Natural killer cell (primary cell): ENCODE measurements at regions of chr15 and their contacts with region 1.

Region 1: GRCh38 chr15:94230956-94231722 is at the start of gene MCTP2:
- DNase-seq: peak; percentile 90 to 93
- ATAC-seq: peak; percentile 82 to 97 (median 90)
- H3K4me3 ChIP-seq: peak within 1 kb of the TSS; percentile 78
- H3K4me3 Mint-ChIP-seq: peak within 1 kb of the TSS; percentile 90
- H3K27ac ChIP-seq: peak within 1 kb of the TSS; percentile 99
- H3K27ac Mint-ChIP-seq: peak within 1 kb of the TSS; percentile 90 to 96
- H3K4me1 ChIP-seq: peaks cover 45% of the 10 kb centered on the region
- H3K4me1 Mint-ChIP-seq: peaks cover 78 to 80% of the 10 kb centered on the region in 2 donors
- H3K27me3 ChIP-seq: no peaks in the 10 kb centered on the region
- H3K27me3 Mint-ChIP-seq: no peaks in the 10 kb centered on the region
- CTCF ChIP-seq: peak; percentile 15
- total RNA-seq, gene MCTP2: 235 to 312 (median 261) TPM

Region 2: GRCh38 chr15:94163999-94164807 is 66.9 kb before region 1 on chr15:
- intact Hi-C with region 1: loop called (anchors 5 kb)
- DNase-seq: peak; percentile 57 to 77
- ATAC-seq: peak; percentile 71 to 89 (median 76)
- H3K4me3 ChIP-seq: no peak overlapping the region
- H3K4me3 Mint-ChIP-seq: peak overlapping the region; percentile 4
- H3K27ac ChIP-seq: no peak overlapping the region
- H3K27ac Mint-ChIP-seq: no peak overlapping the region
- H3K4me1 ChIP-seq: no peaks in the 10 kb centered on the region
- H3K4me1 Mint-ChIP-seq: peaks cover 13 to 14% of the 10 kb centered on the region in 2 donors
- H3K27me3 ChIP-seq: no peaks in the 10 kb centered on the region
- H3K27me3 Mint-ChIP-seq: no peaks in the 10 kb centered on the region
- CTCF ChIP-seq: peak; percentile 99

Region 3: GRCh38 chr15:94272251-94272898 is 41.2 kb after region 1 on chr15:
- intact Hi-C with region 1: loop called (anchors 2 kb)
- DNase-seq: peak in 1 of 2 donors; percentile 62
- ATAC-seq: peak; percentile 74 to 88 (median 86)
- H3K4me3 ChIP-seq: no peak overlapping the region
- H3K4me3 Mint-ChIP-seq: no peak overlapping the region
- H3K27ac ChIP-seq: peak overlapping the region; percentile 93
- H3K27ac Mint-ChIP-seq: no peak overlapping the region
- H3K4me1 ChIP-seq: peaks cover 41% of the 10 kb centered on the region
- H3K4me1 Mint-ChIP-seq: peaks cover 14 to 23% of the 10 kb centered on the region in 2 donors
- H3K27me3 ChIP-seq: no peaks in the 10 kb centered on the region
- H3K27me3 Mint-ChIP-seq: no peaks in the 10 kb centered on the region
- CTCF ChIP-seq: no peak

Region 4: GRCh38 chr15:94305133-94305532 is 74.0 kb after region 1 on chr15:
- intact Hi-C with region 1: loop called (anchors 1 kb)
- DNase-seq: peak; percentile 48 to 64
- ATAC-seq: peak; percentile 70 to 84 (median 80)
- H3K4me3 ChIP-seq: no peak overlapping the region
- H3K4me3 Mint-ChIP-seq: peak overlapping the region; percentile 83
- H3K27ac ChIP-seq: peak overlapping the region; percentile 84
- H3K27ac Mint-ChIP-seq: peak overlapping the region in 1 of 2 donors; percentile 93
- H3K4me1 ChIP-seq: peaks cover 60% of the 10 kb centered on the region
- H3K4me1 Mint-ChIP-seq: peaks cover 90 to 94% of the 10 kb centered on the region in 2 donors
- H3K27me3 ChIP-seq: no peaks in the 10 kb centered on the region
- H3K27me3 Mint-ChIP-seq: no peaks in the 10 kb centered on the region
- CTCF ChIP-seq: no peak